Activated CD8-positive, alpha-beta T cell treated with anti-CD3 and anti-CD28 coated beads for 36 hours (primary cell): ENCODE measurements at regions of chr2 and their contacts with region 1.

Region 1: DNA sequence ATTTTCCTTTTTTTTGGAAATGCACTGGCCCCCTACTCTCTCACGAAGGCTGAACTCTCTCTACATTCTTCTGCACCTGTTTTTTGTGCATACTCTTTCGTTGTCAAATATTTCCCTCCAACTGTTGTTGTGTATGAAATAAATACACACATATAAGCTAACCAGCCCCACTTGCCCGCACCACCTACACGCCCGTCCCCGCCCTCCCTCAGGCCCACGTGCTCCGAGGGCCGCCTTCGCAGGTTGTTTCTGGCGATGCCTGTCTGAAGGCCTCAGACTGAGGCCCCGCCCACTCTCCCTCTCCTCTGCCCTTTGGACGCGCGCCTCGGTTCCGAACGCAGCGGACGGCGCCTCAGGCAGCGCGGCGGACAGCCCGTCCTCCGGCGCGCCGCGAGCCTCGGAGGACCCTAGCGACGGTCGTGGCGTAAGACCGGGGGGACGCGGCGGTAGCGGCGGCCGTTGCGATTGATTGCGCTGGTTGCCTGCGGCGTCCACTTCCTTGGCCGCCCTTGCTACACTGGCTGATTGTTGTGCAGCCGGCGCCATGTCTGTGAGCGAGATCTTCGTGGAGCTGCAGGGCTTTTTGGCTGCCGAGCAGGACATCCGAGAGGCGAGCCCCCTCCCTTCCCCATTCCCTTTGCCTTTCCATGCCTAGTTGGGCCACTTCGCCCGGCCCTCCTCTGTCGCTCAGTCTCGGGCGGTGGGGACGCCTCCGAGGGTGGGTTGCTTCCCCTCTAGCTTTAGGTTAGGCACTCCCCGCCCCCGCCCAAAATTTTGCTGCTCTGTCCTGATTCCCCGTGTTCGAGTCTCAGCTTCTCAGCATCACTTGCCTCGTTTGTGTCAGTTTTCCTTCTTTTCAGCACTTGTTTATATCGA is at the start of gene TSN:
- DNase-seq: peak; percentile 99
- ATAC-seq: peak; percentile 99
- H3K4me3 Mint-ChIP-seq: peak within 1 kb of the TSS; percentile 94
- H3K27ac Mint-ChIP-seq: peak within 1 kb of the TSS; percentile 93
- H3K4me1 Mint-ChIP-seq: peaks cover 35% of the 10 kb centered on the region
- H3K27me3 Mint-ChIP-seq: no peaks in the 10 kb centered on the region
- CTCF ChIP-seq: no peak
- total RNA-seq, gene TSN: 55.9 to 58.1 TPM

Region 2: DNA sequence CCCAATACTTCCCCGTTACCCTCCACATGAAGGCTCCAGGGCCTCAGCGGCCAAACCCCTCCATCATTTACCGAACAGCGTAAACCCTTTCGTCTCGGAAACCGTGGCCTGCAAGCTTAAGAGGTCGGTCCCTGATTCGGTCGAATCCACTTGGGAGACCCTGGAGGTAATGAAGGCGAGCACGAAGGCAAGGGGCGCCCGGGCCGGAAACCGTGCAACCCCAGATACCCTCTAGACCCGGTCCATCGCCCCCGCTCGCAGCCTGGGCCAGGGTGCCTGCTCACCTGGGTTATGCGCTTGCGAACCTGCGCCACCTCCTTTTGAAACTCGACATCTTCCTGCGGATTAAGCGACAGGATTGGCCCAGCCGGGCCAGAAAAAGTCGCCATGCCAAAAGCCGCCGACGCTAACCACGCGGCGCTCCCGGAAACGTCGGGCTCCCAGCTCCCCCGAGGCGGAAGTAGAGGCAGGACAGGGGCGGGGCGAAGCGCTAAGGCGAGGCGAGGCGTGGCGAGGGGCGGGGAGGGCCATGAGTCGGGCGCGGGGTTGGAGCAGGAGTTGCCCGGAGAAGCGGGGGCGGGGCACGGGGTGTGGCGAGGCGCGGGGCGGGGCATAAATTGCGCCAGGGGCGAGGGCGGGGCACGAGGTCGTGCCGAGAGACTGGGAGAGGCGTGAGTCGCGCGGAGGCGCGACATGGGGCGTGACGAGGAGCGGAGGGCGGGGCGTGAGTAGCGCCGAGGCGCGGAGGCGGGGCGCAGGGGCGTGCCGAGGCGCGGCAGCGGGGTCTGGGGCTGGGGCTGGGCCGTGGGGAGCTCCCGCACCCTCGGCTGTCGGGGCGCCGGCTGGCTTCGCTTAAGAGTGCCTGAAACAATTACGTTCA is 18.8 kb before region 1 on chr2 and contains the start of gene NIFK:
- CTCF ChIA-PET with region 1: interaction called, 3 read pairs
- POLR2A ChIA-PET with region 1: interaction called, 11 read pairs
- intact Hi-C with region 1: loop called (anchors 2 kb)
- DNase-seq: peak; percentile 100
- ATAC-seq: peak; percentile 93
- H3K4me3 Mint-ChIP-seq: peak within 1 kb of the TSS; percentile 89
- H3K27ac Mint-ChIP-seq: peak within 1 kb of the TSS; percentile 97
- H3K4me1 Mint-ChIP-seq: peaks cover 41% of the 10 kb centered on the region
- H3K27me3 Mint-ChIP-seq: no peaks in the 10 kb centered on the region
- CTCF ChIP-seq: no peak
- total RNA-seq, gene NIFK: 115 to 134 TPM

Region 3: DNA sequence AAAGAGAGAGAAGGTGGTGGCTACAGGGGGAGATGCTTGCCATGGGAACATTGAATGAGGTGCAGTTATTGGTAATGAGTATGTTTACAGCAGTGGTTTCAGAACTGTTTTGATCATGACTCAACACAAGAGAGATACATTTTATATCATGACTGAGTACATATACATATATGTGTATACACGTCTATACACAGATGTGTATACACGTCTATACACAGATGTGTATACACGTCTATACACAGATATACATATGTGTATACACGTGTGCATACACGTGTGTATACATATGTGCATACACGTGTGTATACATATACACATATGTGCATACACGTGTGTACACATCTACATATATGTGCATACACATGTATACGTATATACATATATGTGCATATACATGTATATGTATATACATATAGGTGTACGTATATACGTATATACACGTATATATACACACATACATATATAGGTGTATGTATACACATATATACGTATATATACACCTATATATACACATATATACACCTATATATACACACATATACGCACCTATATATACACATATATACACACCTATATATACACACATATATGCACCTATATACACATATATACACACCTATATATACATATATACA is 518.4 kb after region 1 on chr2:
- CTCF ChIA-PET with region 1: no interaction called
- POLR2A ChIA-PET with region 1: no interaction called
- intact Hi-C with region 1: no loop called
- DNase-seq: no peak
- ATAC-seq: peak; percentile 39
- H3K4me3 Mint-ChIP-seq: no peak overlapping the region
- H3K27ac Mint-ChIP-seq: no peak overlapping the region
- H3K4me1 Mint-ChIP-seq: no peaks in the 10 kb centered on the region
- H3K27me3 Mint-ChIP-seq: no peaks in the 10 kb centered on the region
- CTCF ChIP-seq: no peak